ENCODE measurements at regions of chr6 and their contacts with region 1.

Region 1: DNA sequence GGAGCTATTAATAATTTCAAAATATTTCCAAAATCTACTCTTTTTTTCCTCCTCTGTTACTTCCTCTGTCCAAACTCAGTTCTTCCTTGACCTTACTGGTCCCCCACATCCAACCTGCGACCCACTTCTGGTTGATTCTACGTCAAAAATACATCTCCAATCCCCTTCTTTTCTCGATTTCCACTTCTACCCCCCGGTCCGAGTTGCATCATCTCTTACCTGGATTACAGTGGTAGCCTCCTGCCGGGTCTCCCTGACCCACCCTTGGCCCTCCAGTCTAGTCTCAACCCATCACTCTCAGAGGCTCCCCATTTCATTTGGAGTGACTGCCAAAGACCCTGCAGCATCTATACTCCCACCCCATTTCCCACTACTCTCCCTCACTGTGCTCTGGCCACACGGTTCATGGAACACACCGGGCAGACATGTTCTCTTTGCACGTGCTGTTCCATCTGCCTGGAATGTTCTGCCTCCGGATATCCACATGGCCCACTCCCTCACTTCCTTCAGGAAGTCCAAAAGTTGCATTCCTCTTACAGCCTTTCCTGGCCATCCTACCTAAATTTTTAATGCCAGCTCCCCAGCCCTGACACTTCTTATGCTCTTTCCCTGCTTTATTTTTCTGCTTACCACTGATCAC is 6.1 kb upstream of the CCND3 start:
- DNase-seq: no peak
- H3K4me3 ChIP-seq: no peak overlapping the region
- H3K27ac ChIP-seq: no peak overlapping the region
- H3K4me1 ChIP-seq: no peaks in the 10 kb centered on the region
- H3K27me3 ChIP-seq: no peaks in the 10 kb centered on the region
- CTCF ChIP-seq: no peak
- POLR2A ChIP-seq: no peak

Region 2: DNA sequence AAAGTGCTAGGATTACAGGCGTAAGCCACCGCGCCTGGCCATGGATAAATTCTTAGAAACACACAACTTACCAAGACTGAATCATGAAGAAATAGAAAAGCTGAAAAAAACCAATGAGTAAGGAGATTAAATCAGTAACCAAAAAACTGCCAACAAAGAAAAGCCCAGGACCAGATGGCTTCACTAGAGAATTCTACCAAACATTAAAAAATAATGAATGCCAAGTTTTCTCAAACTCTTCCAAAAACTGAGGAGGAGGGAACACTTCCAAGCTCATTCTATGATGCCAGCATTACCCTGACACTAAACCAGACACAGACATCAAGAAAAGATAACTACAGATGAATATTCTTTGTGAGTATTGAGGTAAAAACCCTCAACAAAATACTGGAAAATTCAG is 96.8 kb before region 1 on chr6:
- intact Hi-C with region 1: loop called (anchors 5 kb)
- DNase-seq: no peak
- H3K4me3 ChIP-seq: no peak overlapping the region
- H3K27ac ChIP-seq: no peak overlapping the region
- H3K4me1 ChIP-seq: no peaks in the 10 kb centered on the region
- H3K27me3 ChIP-seq: no peaks in the 10 kb centered on the region
- CTCF ChIP-seq: no peak
- POLR2A ChIP-seq: no peak

Region 3: GRCh38 chr6:43297644-43298564 is 1350.2 kb after region 1 on chr6 and contains the start of gene SLC22A7:
- intact Hi-C with region 1: no loop called
- DNase-seq: no peak
- H3K4me3 ChIP-seq: no peak within 1 kb of the TSS
- H3K27ac ChIP-seq: no peak within 1 kb of the TSS
- H3K4me1 ChIP-seq: no peaks in the 10 kb centered on the region
- H3K27me3 ChIP-seq: peaks cover 0 to 11% of the 10 kb centered on the region in 2 donors
- CTCF ChIP-seq: no peak
- POLR2A ChIP-seq: no peak
- total RNA-seq, gene SLC22A7: not detected